Activated T-helper 2 cell treated with anti-CD3 and anti-CD28 coated beads, Interferon-gamma antibody, Interleukin-2, Interleukin-4, amounts not matched to agents 10 μg/mL and 5 μg/mL and 100 μg/mL, durations not matched to agents 14 hours and 24 hours and 36 hours (primary cell): ENCODE measurements at regions of chr21 and their contacts with region 1.

Region 1: GRCh38 chr21:31098576-31099005 is 60.3 kb upstream of the KRTAP19-8 start:
- DNase-seq: peak; percentile 60
- H3K4me3 Mint-ChIP-seq: no peak overlapping the region
- H3K27ac Mint-ChIP-seq: no peak overlapping the region
- H3K4me1 Mint-ChIP-seq: peaks cover 27% of the 10 kb centered on the region
- H3K27me3 Mint-ChIP-seq: peaks cover 13% of the 10 kb centered on the region

Region 2: GRCh38 chr21:31580866-31581276 is 482.3 kb after region 1 on chr21:
- intact Hi-C with region 1: loop called (anchors 5 kb)
- DNase-seq: peak; percentile 56
- H3K4me3 Mint-ChIP-seq: no peak overlapping the region
- H3K27ac Mint-ChIP-seq: no peak overlapping the region
- H3K4me1 Mint-ChIP-seq: no peaks in the 10 kb centered on the region
- H3K27me3 Mint-ChIP-seq: peaks cover 28% of the 10 kb centered on the region

Region 3: GRCh38 chr21:31604591-31605190 is 506.1 kb after region 1 on chr21:
- intact Hi-C with region 1: loop called (anchors 1 kb)
- DNase-seq: peak; percentile 43
- H3K4me3 Mint-ChIP-seq: no peak overlapping the region
- H3K27ac Mint-ChIP-seq: no peak overlapping the region
- H3K4me1 Mint-ChIP-seq: no peaks in the 10 kb centered on the region
- H3K27me3 Mint-ChIP-seq: peaks cover 2% of the 10 kb centered on the region